ENCODE measurements at regions of chr22 and their contacts with region 1.

Region 1: GRCh38 chr22:40436505-40437451 is 66.4 kb downstream of the SGSM3 start:
- DNase-seq: no peak
- H3K4me3 ChIP-seq: no peak overlapping the region
- CTCF ChIP-seq: no peak

Region 2: GRCh38 chr22:40178417-40179409 is 258.1 kb before region 1 on chr22:
- CTCF ChIA-PET with region 1: no interaction called
- POLR2A ChIA-PET with region 1: no interaction called
- DNase-seq: no peak
- H3K4me3 ChIP-seq: peak overlapping the region; percentile 74
- CTCF ChIP-seq: no peak

Region 3: DNA sequence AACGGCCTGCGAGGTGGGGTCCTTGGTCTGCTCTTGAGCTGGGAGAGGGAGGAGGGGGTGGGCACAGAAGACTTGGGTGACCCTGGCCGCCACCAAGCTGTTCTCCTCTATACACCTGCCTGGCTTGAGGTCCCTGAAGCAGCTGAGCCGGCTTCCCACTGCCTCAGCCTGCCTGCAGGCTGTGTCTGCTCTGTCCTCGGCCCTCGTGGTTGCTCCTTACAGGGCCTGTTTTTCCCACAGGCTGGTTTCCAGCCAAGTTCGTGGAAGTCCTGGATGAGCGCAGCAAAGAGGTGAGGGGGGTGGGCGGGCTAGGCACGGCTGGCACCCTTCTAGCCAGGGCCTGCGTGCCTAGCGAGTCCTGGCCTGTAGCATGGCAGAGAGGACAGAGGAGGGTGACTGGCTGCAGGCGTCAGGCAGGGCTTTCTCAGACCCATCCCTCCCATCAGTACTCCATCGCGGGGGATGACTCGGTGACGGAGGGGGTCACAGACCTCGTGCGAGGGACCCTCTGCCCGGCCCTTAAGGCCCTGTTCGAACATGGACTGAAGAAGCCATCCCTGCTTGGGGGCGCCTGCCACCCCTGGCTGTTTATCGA is 28.9 kb before region 1 on chr22:
- CTCF ChIA-PET with region 1: interaction called, 10 read pairs
- POLR2A ChIA-PET with region 1: no interaction called
- DNase-seq: no peak
- H3K4me3 ChIP-seq: no peak overlapping the region
- CTCF ChIP-seq: no peak

Region 4: DNA sequence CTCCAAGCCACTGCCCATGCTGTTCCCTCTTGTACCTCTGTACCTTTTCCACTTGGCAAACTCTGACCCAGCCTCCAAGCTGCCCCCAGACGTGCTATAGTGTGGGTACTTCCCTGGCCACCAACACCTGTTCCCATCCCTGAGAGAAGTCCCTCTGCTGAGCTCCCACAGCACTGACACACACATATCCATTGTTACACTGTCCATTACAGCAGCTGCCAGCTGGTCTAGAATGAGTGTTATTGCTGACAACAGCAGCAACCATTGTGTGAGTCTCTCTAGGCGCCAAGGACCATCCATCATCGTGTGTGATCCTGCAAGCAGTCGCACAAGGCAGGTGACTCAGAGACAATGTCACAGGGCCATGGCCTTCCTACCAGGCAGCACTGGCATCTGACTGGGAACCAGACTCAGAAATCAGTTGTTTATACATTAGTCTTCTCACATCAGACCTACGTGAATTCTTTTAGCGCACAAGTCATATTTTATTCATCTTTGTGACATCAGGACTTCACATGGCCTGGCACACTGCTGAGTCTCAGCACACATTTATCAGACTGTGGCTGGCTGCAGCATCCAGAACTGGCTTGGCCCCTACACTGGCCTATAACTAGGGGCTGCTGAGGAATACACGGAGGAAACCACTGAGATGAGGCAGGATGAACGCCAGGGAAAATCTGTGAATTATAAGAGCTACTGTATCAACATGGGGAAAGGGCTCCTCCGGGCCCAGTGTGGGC is 10.0 kb before region 1 on chr22:
- CTCF ChIA-PET with region 1: interaction called, 64 read pairs
- POLR2A ChIA-PET with region 1: no interaction called
- DNase-seq: no peak
- H3K4me3 ChIP-seq: no peak overlapping the region
- CTCF ChIP-seq: no peak

Region 5: DNA sequence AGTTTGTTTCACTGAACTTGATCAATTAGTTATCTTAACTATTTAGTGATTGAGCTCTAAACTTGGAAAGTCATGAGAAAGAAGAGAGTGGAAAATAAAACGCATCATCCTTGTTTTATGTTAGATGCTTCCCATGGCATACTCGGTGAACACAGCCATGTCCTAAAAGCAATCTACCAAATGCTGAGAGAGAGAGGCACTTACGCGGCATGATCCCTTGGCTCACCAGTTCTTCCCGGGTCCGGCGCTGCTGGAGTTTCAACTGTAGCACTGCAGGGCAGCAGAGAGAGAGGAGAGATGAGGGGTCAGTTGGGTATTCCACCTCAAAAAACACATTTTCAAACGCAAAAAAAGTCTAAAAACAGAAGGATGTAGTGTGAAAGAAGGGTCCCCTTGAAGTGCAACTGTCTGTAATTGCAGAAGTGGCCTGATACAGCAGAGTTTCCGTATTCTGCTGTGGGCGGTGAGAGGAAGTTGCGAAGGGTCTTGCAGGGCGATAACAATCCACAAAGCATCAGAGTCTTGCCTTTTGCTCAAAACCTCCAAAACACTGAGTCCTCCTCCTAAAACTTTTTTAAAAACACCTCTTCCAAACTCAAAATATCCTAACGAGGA is 26.3 kb after region 1 on chr22:
- CTCF ChIA-PET with region 1: interaction called, 29 read pairs
- POLR2A ChIA-PET with region 1: no interaction called
- DNase-seq: no peak
- H3K4me3 ChIP-seq: no peak overlapping the region
- CTCF ChIP-seq: no peak

Region 6: DNA sequence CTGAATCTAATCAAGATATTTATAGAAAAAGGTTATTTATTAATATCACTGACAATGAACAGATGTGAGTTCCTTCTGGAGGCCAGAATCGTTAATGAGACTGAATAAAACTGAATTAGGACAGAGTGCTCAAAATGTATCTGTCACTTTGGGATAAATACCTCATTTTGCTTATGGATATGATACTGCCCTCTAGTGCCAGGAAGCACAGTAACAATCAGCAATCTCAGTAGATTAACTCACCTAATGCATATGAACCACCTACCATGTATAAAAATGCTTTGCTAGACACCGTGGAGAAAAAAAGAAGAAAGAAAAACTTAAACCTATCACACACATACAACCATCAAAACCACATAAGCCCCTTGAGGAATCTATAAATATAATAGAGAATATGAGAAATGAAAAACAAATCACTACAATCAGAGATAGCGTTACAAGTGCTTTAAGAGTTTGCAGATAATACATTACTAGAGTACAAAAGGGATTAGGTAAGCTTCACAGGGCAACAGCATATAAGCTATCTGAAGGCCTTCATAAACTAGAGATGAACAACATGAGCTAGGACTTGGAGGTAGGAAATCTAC is 51.0 kb after region 1 on chr22:
- CTCF ChIA-PET with region 1: interaction called, 37 read pairs
- POLR2A ChIA-PET with region 1: no interaction called
- DNase-seq: no peak
- H3K4me3 ChIP-seq: no peak overlapping the region
- CTCF ChIP-seq: peak; percentile 67

Region 7: DNA sequence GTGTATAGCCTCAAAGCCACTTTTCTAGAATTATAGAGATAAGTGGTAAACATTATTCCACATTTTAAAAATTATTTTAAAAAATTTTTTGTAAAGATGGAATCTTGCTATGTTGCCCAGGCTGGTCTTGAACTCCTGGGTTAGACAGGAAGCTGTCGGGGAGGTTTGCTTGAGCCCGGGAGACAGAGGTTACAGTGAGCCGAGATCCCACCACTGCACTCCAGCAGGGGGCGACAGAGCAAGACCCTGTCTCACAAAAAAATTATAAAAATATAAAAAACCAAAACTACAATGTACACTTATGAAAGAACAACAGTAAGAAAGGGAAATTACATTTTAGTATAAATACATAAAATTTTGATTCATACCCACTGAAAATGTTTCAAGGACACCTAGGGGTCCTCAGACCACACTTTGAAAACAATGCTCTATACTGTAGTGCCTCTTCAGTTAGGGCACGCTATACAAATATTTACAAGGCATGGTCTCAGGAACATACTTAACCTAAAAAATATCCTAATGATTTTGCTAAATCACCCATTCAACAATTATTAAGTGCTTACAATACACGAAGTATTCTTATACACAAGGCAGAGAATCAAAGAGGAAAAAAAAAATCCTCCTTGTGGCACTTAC is 88.6 kb after region 1 on chr22:
- CTCF ChIA-PET with region 1: interaction called, 30 read pairs
- POLR2A ChIA-PET with region 1: no interaction called
- DNase-seq: no peak
- H3K4me3 ChIP-seq: no peak overlapping the region
- CTCF ChIP-seq: peak; percentile 59

Region 8: DNA sequence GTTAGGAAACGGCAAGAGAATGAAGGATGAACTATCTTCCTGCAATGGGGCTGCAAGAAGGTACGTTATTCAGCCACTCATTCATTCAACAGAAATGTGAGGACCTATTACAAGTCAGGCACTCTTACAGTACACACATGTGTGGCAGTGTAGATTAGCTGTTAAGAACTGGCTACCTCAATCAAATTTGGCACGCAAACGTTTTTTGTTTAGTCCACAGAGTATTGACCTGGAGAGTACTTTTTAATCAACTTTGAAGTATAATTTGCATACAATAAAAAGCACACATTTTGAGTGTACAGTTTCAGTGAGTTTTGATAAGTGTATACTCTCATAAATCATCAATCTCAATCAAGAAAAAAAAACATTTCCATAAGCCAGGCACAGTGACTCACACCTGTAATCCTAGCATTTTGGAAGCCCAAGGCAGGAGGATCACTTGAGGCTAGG is 175.5 kb after region 1 on chr22:
- CTCF ChIA-PET with region 1: no interaction called
- POLR2A ChIA-PET with region 1: no interaction called
- DNase-seq: no peak
- H3K4me3 ChIP-seq: no peak overlapping the region
- CTCF ChIP-seq: no peak

Region 9: DNA sequence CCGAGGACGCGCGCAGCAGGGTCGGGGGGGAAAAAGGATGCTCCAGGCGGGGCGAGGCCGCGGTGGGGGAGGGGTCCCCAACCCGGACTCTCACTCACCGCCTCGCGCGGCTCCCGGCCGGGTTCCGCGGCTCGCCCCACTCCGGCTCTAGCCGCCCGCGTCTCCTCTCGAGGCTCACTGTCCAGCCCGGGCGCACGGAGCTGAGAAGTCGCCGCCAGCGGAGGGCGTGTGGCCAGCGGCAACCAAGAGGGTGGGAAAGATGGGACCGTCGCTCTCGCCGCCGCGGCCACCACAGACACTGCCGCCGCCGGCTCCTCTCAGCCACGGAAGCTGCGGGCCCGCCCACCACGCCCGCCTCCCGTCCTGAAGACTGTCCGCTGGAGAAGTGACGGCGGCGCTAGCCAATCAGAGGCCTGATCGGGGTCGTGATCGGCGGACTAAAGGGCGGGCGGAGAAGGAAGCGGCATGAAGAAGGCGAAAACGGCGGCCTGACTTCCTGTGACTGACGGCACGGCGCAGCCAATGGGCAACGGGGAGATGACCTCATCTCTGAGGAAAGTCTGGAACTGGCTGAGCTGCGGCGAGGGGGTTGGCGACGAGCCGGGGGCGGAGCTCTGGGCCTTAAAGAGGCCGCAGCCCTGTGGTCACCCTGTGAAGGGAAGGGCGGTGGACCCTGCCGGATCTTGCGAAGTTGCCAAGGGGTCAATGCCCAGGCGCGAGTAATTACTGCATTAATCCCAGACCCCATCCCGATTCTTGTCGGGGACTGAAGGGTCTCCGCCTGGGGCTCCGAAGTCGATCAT is 199.8 kb after region 1 on chr22 and contains the start of gene MRTFA:
- CTCF ChIA-PET with region 1: interaction called, 233 read pairs
- POLR2A ChIA-PET with region 1: interaction called, 5 read pairs
- DNase-seq: peak; percentile 96
- H3K4me3 ChIP-seq: peak within 1 kb of the TSS; percentile 90
- CTCF ChIP-seq: no peak

Measured in AG04449 (cell line).